Dorsolateral prefrontal cortex (tissue), 120 donors: ENCODE measurements at regions of chr12 and their contacts with region 1.

Region 1: DNA sequence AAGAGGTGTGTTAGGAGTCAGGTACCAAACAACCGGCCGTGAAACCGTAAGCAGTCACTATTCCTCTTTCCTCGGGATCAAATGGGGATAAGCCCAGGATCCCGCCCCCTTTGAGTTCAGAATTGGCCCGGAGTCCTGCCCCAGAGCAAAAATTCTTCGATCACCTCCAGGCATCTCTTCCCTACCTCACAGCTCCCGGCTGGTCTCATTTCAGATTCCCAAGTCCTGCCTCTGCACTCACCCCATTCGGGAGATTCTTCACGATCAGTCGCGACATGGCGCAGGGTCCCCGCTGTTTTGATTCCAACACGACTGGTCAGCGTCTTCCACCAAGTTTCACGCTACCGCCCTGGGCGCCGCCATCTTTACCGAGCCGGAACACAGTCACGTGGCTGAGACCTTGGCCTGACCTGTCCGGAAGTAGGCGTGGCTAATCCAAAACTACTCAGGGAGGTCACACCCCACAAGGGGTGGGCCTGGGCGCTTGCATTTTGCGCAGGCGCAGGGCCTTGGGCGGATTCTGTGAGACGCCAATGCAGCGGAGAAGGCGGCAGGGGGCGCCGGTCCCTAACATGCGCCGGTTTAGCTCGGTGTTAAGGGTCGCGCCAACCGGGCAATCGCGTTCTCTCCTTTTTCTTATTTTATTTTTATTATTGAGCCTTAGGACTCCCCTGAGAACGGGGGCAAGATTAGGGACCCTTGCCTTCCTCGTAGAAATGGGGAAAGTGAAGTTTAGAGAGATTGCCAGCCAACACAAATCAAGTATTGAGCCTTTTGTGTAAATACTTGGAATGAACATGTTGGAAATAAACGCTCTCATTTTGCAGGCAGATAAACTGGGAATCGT is at the start of gene RBM19:
- DNase-seq: peak; percentile 97 to 99 (median 98)
- H3K4me3 ChIP-seq: peak within 1 kb of the TSS; percentile 45 to 97 (median 78)
- H3K27ac ChIP-seq: peak within 1 kb of the TSS in 58 of 59 donors; percentile 6 to 90 (median 76)
- H3K27me3 ChIP-seq: no peaks in the 10 kb centered on the region
- CTCF ChIP-seq: peak; percentile 86 to 99 (median 96)
- total RNA-seq, gene RBM19: 29.7 to 64.7 (median 41.5) TPM

Region 2: GRCh38 chr12:113889891-113890581 is 76.1 kb before region 1 on chr12:
- intact Hi-C with region 1: no loop called
- DNase-seq: peak in 2 of 10 donors; percentile 22 to 55
- H3K4me3 ChIP-seq: peak overlapping the region in 58 of 59 donors; percentile 10 to 65 (median 44)
- H3K27ac ChIP-seq: peak overlapping the region in 31 of 59 donors; percentile 1 to 70 (median 37)
- H3K27me3 ChIP-seq: no peaks in the 10 kb centered on the region
- CTCF ChIP-seq: no peak

Region 3: DNA sequence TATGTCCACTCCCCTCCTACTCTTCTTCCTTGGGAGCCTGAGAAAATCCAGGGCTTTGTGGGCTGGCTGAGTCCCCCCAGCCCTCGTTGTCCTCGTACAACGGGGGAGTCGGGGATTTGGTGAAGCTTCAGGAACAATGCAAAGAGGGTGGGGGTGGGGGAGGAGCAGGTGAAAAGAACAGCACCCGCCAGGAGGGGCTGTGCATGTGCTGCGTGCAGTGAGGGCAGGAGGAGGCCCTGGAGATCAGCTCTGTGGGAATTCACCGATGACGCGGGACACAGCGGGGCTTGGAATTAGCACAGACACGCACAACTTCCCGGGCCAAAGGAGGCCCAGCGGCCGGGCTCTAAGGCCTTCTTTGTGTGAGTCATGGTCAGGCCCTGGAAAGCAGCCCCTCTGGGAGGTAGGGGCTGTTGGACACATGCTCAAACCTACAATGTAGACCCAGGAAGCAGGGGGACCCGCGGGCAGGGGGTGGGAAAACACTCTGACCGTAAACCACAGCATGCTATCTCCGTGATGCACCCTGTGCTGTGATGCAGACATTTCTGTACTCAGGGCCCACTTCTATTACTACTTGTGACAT is 32.9 kb before region 1 on chr12:
- intact Hi-C with region 1: loop called (anchors 2 to 5 kb)
- DNase-seq: peak in 7 of 10 donors; percentile 33 to 55 (median 38)
- H3K4me3 ChIP-seq: no peak overlapping the region
- H3K27ac ChIP-seq: peak overlapping the region; percentile 13 to 99 (median 94)
- H3K27me3 ChIP-seq: no peaks in the 10 kb centered on the region
- CTCF ChIP-seq: no peak

Region 4: GRCh38 chr12:114186241-114187002 is 220.2 kb after region 1 on chr12:
- intact Hi-C with region 1: loop called in 1 of 2 experiments (anchors 10 kb)
- DNase-seq: peak; percentile 7 to 94 (median 83)
- H3K4me3 ChIP-seq: peak overlapping the region in 5 of 59 donors; percentile 2 to 38 (median 10)
- H3K27ac ChIP-seq: peak overlapping the region; percentile 49 to 99 (median 92)
- H3K27me3 ChIP-seq: peaks cover 0 to 5% (median 0%) of the 10 kb centered on the region in 45 donors
- CTCF ChIP-seq: peak in 14 of 56 donors; percentile 9 to 47 (median 18)